ENCODE measurements at regions of chr4 and their contacts with region 1.

Region 1: GRCh38 chr4:153127760-153128494 is 76.3 kb upstream of the TRIM2 start:
- DNase-seq: peak; percentile 63 to 96
- H3K4me3 ChIP-seq: peak overlapping the region in 3 of 4 experiments; percentile 3 to 42 (median 19); a peak in 4 of 8 replicates
- H3K27ac ChIP-seq: peak overlapping the region; percentile 1; the same call in 1 of the 2 replicates
- H3K4me1 ChIP-seq: peaks cover 0 to 7% (median 4%) of the 10 kb centered on the region in 4 experiments; a peak in 3 of 7 replicates
- H3K27me3 ChIP-seq: no peaks in the 10 kb centered on the region
- CTCF ChIP-seq: peak; percentile 42 to 84 (median 70)
- EP300 ChIP-seq: no peak
- POLR2A ChIP-seq: no peak
- RAD21 ChIP-seq: peak; percentile 94 to 97

Region 2: DNA sequence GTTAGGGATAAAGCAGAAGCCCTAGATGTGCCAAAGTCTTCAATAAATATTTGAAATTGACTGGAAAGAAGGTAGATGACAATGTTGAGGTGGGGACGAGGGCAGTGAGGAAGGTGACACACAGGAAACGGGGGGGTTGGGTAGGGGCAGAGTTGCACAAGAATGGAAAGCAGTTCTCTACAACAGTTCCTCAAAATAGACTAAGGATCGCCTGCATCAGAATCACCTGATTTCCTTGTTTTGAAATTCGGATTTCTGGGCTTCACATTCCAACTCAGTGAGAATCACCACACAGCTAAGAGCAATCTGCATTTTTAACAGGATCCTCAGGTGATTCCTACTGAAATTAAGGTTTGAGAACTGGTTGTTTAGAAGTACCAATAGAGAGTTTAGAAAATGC is 277.6 kb before region 1 on chr4:
- CTCF ChIA-PET with region 1: interaction called, 59 read pairs
- POLR2A ChIA-PET with region 1: interaction called, 3 read pairs
- DNase-seq: peak in 1 of 2 experiments; percentile 63
- H3K4me3 ChIP-seq: peak overlapping the region in 1 of 4 experiments; percentile 32; a peak in 1 of 8 replicates
- H3K27ac ChIP-seq: peak overlapping the region; percentile 59; the same call in 1 of the 2 replicates
- H3K4me1 ChIP-seq: peaks cover 7 to 17% (median 10%) of the 10 kb centered on the region in 4 experiments; a peak in 6 of 7 replicates
- H3K27me3 ChIP-seq: no peaks in the 10 kb centered on the region
- CTCF ChIP-seq: no peak
- EP300 ChIP-seq: peak in 1 of 2 experiments; percentile 57; a peak in 1 of 3 replicates
- POLR2A ChIP-seq: peak in 1 of 2 experiments; percentile 53; a peak in 1 of 3 replicates
- RAD21 ChIP-seq: no peak

Region 3: GRCh38 chr4:152983774-152984411 is 144.0 kb before region 1 on chr4:
- CTCF ChIA-PET with region 1: interaction called, 14 read pairs
- POLR2A ChIA-PET with region 1: no interaction called
- DNase-seq: no peak
- H3K4me3 ChIP-seq: no peak overlapping the region
- H3K27ac ChIP-seq: no peak overlapping the region
- H3K4me1 ChIP-seq: peaks cover 3 to 7% (median 4%) of the 10 kb centered on the region in 4 experiments
- H3K27me3 ChIP-seq: no peaks in the 10 kb centered on the region
- CTCF ChIP-seq: no peak
- EP300 ChIP-seq: no peak
- POLR2A ChIP-seq: no peak
- RAD21 ChIP-seq: no peak

Region 4: GRCh38 chr4:153083447-153083947 is 44.4 kb before region 1 on chr4:
- CTCF ChIA-PET with region 1: interaction called, 82 read pairs
- POLR2A ChIA-PET with region 1: no interaction called
- DNase-seq: peak; percentile 56 to 63
- H3K4me3 ChIP-seq: no peak overlapping the region
- H3K27ac ChIP-seq: no peak overlapping the region
- H3K4me1 ChIP-seq: peaks cover 3 to 21% (median 15%) of the 10 kb centered on the region in 4 experiments
- H3K27me3 ChIP-seq: peaks cover 0 to 7% (median 2%) of the 10 kb centered on the region in 4 experiments; a peak in 2 of 7 replicates
- CTCF ChIP-seq: peak in 2 of 3 experiments; percentile 67; a peak in 3 of 4 replicates
- EP300 ChIP-seq: peak in 1 of 2 experiments; percentile 59; a peak in 1 of 3 replicates
- POLR2A ChIP-seq: no peak
- RAD21 ChIP-seq: peak; percentile 63 to 75

Region 5: DNA sequence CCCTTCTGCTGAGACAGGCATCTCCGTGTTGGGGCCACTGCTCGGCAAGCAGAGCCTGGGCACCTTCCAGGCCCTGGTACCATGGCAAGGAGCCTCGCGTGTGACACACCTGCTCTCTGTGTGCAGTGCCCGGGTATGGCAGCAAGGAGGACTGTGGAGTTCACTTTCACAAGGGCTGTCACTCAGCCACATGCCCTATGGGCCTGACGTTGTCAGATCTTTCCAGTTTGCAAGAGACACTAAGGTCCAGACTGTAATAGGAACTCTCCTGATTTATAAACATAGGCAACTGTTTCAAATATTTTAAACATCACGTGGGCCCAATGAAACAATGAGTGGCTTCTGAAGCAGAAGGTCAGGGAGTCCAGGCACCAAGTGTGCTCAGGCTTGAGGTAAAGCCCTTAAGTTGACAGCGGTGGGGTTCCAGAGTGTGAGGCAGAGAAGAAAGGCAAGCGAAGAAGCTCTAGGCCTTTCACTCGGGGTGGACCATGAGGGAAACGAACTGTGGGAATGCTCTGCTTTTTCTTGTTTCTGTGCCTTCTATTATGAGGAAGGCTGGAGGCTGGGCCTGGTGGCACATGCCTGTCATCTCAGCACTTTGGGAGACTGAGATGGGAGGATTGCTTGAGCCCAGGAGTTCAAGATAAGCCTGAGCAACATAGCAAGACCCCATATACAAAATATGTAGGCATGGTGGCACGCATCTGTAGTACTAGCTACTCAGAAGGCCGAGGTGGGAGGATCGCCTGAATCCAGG is 32.3 kb before region 1 on chr4:
- CTCF ChIA-PET with region 1: interaction called, 19 read pairs
- POLR2A ChIA-PET with region 1: no interaction called
- DNase-seq: no peak
- H3K4me3 ChIP-seq: no peak overlapping the region
- H3K27ac ChIP-seq: no peak overlapping the region
- H3K4me1 ChIP-seq: 0 out of 7 replicates have a peak, but pooled peaks cover 0 to 3% (median 0%) of the 10 kb centered on the region in 4 experiments
- H3K27me3 ChIP-seq: no peaks in the 10 kb centered on the region
- CTCF ChIP-seq: no peak
- EP300 ChIP-seq: no peak
- POLR2A ChIP-seq: no peak
- RAD21 ChIP-seq: no peak

Region 6: GRCh38 chr4:153115322-153116290 is 12.3 kb before region 1 on chr4:
- CTCF ChIA-PET with region 1: interaction called, 72 read pairs
- POLR2A ChIA-PET with region 1: interaction called, 4 read pairs
- DNase-seq: no peak
- H3K4me3 ChIP-seq: no peak overlapping the region
- H3K27ac ChIP-seq: no peak overlapping the region
- H3K4me1 ChIP-seq: no peaks in the 10 kb centered on the region; a peak in 1 of 7 replicates
- H3K27me3 ChIP-seq: no peaks in the 10 kb centered on the region; a peak in 1 of 7 replicates
- CTCF ChIP-seq: no peak
- EP300 ChIP-seq: no peak
- POLR2A ChIP-seq: no peak
- RAD21 ChIP-seq: no peak

Measured in H1 (cell line).